GM12878 (cell line): ENCODE measurements at regions of chr11 and their contacts with region 1.

Region 1: GRCh38 chr11:102666331-102666957 is 39.1 kb downstream of the MMP27 start:
- DNase-seq: no peak
- ATAC-seq: peak; percentile 76
- H3K4me3 ChIP-seq: no peak overlapping the region
- H3K27ac ChIP-seq: no peak overlapping the region
- H3K4me1 ChIP-seq: no peaks in the 10 kb centered on the region
- H3K27me3 ChIP-seq: peaks cover 0 to 3% of the 10 kb centered on the region in 2 experiments; a peak in 1 of 4 replicates
- CTCF ChIP-seq: peak; percentile 81 to 87 (median 82)
- EP300 ChIP-seq: no peak
- POLR2A ChIP-seq: no peak
- RAD21 ChIP-seq: peak; percentile 97

Region 2: GRCh38 chr11:101860696-101861427 is 805.6 kb before region 1 on chr11:
- CTCF ChIA-PET with region 1: interaction called, 13 read pairs
- POLR2A ChIA-PET with region 1: no interaction called
- RAD21 ChIA-PET with region 1: interaction called, 14 read pairs
- SMC1A ChIA-PET with region 1: interaction called, 9 read pairs
- in situ Hi-C with region 1: loop called (anchors 25 kb)
- intact Hi-C with region 1: no loop called
- DNase-seq: no peak
- ATAC-seq: peak; percentile 91
- H3K4me3 ChIP-seq: no peak overlapping the region
- H3K27ac ChIP-seq: no peak overlapping the region
- H3K4me1 ChIP-seq: no peaks in the 10 kb centered on the region
- H3K27me3 ChIP-seq: no peaks in the 10 kb centered on the region; a peak in 1 of 4 replicates
- CTCF ChIP-seq: peak; percentile 61 to 72 (median 65)
- EP300 ChIP-seq: no peak
- POLR2A ChIP-seq: no peak
- RAD21 ChIP-seq: peak; percentile 57

Region 3: GRCh38 chr11:102279641-102280170 is 386.7 kb before region 1 on chr11:
- CTCF ChIA-PET with region 1: interaction called, 38 read pairs
- POLR2A ChIA-PET with region 1: no interaction called
- RAD21 ChIA-PET with region 1: interaction called, 6 read pairs
- SMC1A ChIA-PET with region 1: interaction called, 10 read pairs
- in situ Hi-C with region 1: no loop called
- intact Hi-C with region 1: no loop called
- DNase-seq: peak; percentile 68
- ATAC-seq: peak; percentile 96
- H3K4me3 ChIP-seq: no peak overlapping the region
- H3K27ac ChIP-seq: no peak overlapping the region
- H3K4me1 ChIP-seq: peaks cover 4% of the 10 kb centered on the region; the same call in 1 of the 2 replicates
- H3K27me3 ChIP-seq: no peaks in the 10 kb centered on the region
- CTCF ChIP-seq: peak; percentile 16 to 30 (median 27); a peak in 3 of 6 replicates
- EP300 ChIP-seq: 0 out of 4 replicates have a peak, but pooled peaks of 1 of the 2 experiments have one; percentile 18
- POLR2A ChIP-seq: no peak
- RAD21 ChIP-seq: no peak

Region 4: DNA sequence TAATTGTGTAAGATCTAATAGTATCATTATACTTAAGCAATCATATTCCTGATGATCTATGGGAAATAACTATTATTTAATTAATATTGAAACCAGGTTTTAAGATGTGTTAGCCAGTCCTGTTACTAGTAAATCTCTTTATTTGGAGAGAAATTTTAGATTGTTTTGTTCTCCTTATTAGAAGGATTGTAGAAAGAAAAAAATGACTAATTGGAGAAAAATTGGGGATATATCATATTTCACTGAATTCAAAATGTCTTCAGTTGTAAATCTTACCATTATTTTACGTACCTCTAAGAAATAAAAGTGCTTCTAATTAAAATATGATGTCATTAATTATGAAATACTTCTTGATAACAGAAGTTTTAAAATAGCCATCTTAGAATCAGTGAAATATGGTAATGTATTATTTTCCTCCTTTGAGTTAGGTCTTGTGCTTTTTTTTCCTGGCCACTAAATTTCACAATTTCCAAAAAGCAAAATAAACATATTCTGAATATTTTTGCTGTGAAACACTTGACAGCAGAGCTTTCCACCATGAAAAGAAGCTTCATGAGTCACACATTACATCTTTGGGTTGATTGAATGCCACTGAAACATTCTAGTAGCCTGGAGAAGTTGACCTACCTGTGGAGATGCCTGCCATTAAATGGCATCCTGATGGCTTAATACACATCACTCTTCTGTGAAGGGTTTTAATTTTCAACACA is 342.7 kb before region 1 on chr11:
- CTCF ChIA-PET with region 1: interaction called, 13 read pairs
- POLR2A ChIA-PET with region 1: no interaction called
- RAD21 ChIA-PET with region 1: interaction called, 3 read pairs
- SMC1A ChIA-PET with region 1: interaction called, 3 read pairs
- in situ Hi-C with region 1: no loop called
- intact Hi-C with region 1: no loop called
- DNase-seq: no peak
- ATAC-seq: no peak
- H3K4me3 ChIP-seq: peak overlapping the region; percentile 49; the same call in 1 of the 2 replicates
- H3K27ac ChIP-seq: no peak overlapping the region
- H3K4me1 ChIP-seq: no peaks in the 10 kb centered on the region
- H3K27me3 ChIP-seq: no peaks in the 10 kb centered on the region
- CTCF ChIP-seq: no peak
- EP300 ChIP-seq: no peak
- POLR2A ChIP-seq: no peak
- RAD21 ChIP-seq: no peak

Region 5: GRCh38 chr11:102367364-102367763 is 299.1 kb before region 1 on chr11:
- CTCF ChIA-PET with region 1: interaction called, 23 read pairs
- POLR2A ChIA-PET with region 1: no interaction called
- RAD21 ChIA-PET with region 1: interaction called, 17 read pairs
- SMC1A ChIA-PET with region 1: interaction called, 19 read pairs
- in situ Hi-C with region 1: no loop called
- intact Hi-C with region 1: no loop called
- DNase-seq: no peak
- ATAC-seq: peak; percentile 58
- H3K4me3 ChIP-seq: no peak overlapping the region
- H3K27ac ChIP-seq: no peak overlapping the region
- H3K4me1 ChIP-seq: peaks cover 11% of the 10 kb centered on the region; the same call in 1 of the 2 replicates
- H3K27me3 ChIP-seq: no peaks in the 10 kb centered on the region
- CTCF ChIP-seq: peak; percentile 2 to 25 (median 17); a peak in 2 of 6 replicates
- EP300 ChIP-seq: no peak
- POLR2A ChIP-seq: no peak
- RAD21 ChIP-seq: peak; percentile 40; the same call in 1 of the 2 replicates

Region 6: GRCh38 chr11:102495161-102496042 is 171.0 kb before region 1 on chr11:
- CTCF ChIA-PET with region 1: interaction called, 27 read pairs
- POLR2A ChIA-PET with region 1: no interaction called
- RAD21 ChIA-PET with region 1: interaction called, 9 read pairs
- SMC1A ChIA-PET with region 1: interaction called, 11 read pairs
- in situ Hi-C with region 1: no loop called
- intact Hi-C with region 1: loop called (anchors 2 kb)
- DNase-seq: peak; percentile 79
- ATAC-seq: peak; percentile 97
- H3K4me3 ChIP-seq: peak overlapping the region; percentile 34; the same call in 1 of the 2 replicates
- H3K27ac ChIP-seq: no peak overlapping the region
- H3K4me1 ChIP-seq: peaks cover 14% of the 10 kb centered on the region
- H3K27me3 ChIP-seq: 0 out of 4 replicates have a peak, but pooled peaks cover 0 to 3% of the 10 kb centered on the region in 2 experiments
- CTCF ChIP-seq: peak; percentile 53 to 78 (median 56); a peak in 5 of 6 replicates
- EP300 ChIP-seq: peak; percentile 67 to 68; a peak in 3 of 4 replicates
- POLR2A ChIP-seq: no peak
- RAD21 ChIP-seq: peak; percentile 90

Region 7: GRCh38 chr11:102653744-102654291 is 12.6 kb before region 1 on chr11:
- CTCF ChIA-PET with region 1: interaction called, 23 read pairs
- POLR2A ChIA-PET with region 1: no interaction called
- RAD21 ChIA-PET with region 1: interaction called, 8 read pairs
- SMC1A ChIA-PET with region 1: interaction called, 12 read pairs
- in situ Hi-C with region 1: no loop called
- intact Hi-C with region 1: no loop called
- DNase-seq: no peak
- ATAC-seq: no peak
- H3K4me3 ChIP-seq: no peak overlapping the region
- H3K27ac ChIP-seq: no peak overlapping the region
- H3K4me1 ChIP-seq: no peaks in the 10 kb centered on the region
- H3K27me3 ChIP-seq: no peaks in the 10 kb centered on the region; a peak in 2 of 4 replicates
- CTCF ChIP-seq: no peak
- EP300 ChIP-seq: no peak
- POLR2A ChIP-seq: no peak
- RAD21 ChIP-seq: no peak

Region 8: GRCh38 chr11:102981324-102981910 is 315.0 kb after region 1 on chr11:
- CTCF ChIA-PET with region 1: no interaction called
- POLR2A ChIA-PET with region 1: no interaction called
- RAD21 ChIA-PET with region 1: no interaction called
- SMC1A ChIA-PET with region 1: no interaction called
- in situ Hi-C with region 1: no loop called
- intact Hi-C with region 1: no loop called
- DNase-seq: no peak
- ATAC-seq: peak; percentile 72
- H3K4me3 ChIP-seq: no peak overlapping the region
- H3K27ac ChIP-seq: no peak overlapping the region
- H3K4me1 ChIP-seq: no peaks in the 10 kb centered on the region
- H3K27me3 ChIP-seq: no peaks in the 10 kb centered on the region
- CTCF ChIP-seq: no peak
- EP300 ChIP-seq: no peak
- POLR2A ChIP-seq: no peak
- RAD21 ChIP-seq: no peak